CD8-positive, alpha-beta T cell (primary cell): ENCODE measurements at regions of chr19 and their contacts with region 1.

Region 1: DNA sequence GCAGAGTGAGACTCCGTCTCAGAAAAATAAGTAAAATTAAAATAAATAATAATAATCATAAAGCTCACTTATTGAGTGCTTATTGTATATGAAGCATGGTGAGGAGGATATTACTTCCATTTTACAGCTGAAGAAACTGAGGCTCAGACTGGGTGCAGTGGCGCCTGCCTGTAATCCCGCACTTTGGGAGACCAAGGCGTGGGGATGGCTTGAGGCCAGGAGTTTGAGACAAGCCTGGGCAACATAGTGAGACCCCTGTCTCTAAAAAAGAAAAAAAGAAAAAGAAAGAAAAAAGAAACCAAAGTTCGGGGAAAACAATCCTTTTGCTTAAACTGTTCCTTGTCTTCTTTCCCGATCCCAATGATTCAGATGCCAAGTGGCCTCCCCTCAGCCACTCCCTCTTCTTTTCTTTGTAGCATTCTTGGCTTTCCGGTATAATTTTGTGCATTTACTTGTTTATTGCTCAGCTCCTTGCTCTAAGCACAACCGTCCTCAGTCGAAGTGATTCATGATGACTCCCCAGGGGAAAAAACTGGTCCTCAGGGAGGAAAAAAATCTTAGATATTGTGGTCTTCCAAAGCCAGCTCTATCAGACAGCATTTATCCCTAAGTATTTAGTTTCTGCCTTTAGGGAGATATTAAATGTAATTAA is 965 bp upstream of the EIF3G start:
- DNase-seq: no peak
- ATAC-seq: no peak
- H3K4me3 ChIP-seq: no peak overlapping the region
- H3K4me3 Mint-ChIP-seq: peak overlapping the region; percentile 47
- H3K27ac ChIP-seq: no peak overlapping the region
- H3K27ac Mint-ChIP-seq: no peak overlapping the region
- H3K4me1 ChIP-seq: peaks cover 22% of the 10 kb centered on the region
- H3K4me1 Mint-ChIP-seq: peaks cover 29% of the 10 kb centered on the region
- H3K27me3 ChIP-seq: no peaks in the 10 kb centered on the region
- H3K27me3 Mint-ChIP-seq: no peaks in the 10 kb centered on the region
- CTCF ChIP-seq: no peak

Region 2: DNA sequence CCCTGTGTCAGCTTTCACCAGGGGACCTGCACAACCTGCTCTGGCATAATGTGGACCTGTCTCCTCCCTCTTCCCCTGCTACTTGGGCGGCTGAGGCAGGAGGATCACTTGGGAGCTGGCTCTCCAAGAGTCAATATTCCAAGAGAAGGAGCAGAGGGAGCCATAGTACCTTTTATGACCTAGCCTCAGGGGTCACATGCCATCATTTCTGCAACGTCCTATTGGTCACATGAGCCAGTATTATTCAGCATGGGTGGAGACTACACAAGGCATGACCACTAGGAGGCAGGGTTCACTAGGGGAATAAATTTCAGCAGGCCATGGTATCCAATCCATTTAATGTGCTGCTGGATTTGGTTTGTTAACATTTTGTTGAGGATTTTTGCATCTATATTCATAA is 46.5 kb before region 1 on chr19:
- CTCF ChIA-PET with region 1: no interaction called
- POLR2A ChIA-PET with region 1: no interaction called
- intact Hi-C with region 1: no loop called
- DNase-seq: peak in 6 of 9 experiments; percentile 34 to 83 (median 51)
- ATAC-seq: peak; percentile 84
- H3K4me3 ChIP-seq: no peak overlapping the region
- H3K4me3 Mint-ChIP-seq: no peak overlapping the region
- H3K27ac ChIP-seq: no peak overlapping the region
- H3K27ac Mint-ChIP-seq: peak overlapping the region; percentile 23
- H3K4me1 ChIP-seq: no peaks in the 10 kb centered on the region
- H3K4me1 Mint-ChIP-seq: no peaks in the 10 kb centered on the region
- H3K27me3 ChIP-seq: no peaks in the 10 kb centered on the region
- H3K27me3 Mint-ChIP-seq: no peaks in the 10 kb centered on the region
- CTCF ChIP-seq: peak; percentile 52

Region 3: DNA sequence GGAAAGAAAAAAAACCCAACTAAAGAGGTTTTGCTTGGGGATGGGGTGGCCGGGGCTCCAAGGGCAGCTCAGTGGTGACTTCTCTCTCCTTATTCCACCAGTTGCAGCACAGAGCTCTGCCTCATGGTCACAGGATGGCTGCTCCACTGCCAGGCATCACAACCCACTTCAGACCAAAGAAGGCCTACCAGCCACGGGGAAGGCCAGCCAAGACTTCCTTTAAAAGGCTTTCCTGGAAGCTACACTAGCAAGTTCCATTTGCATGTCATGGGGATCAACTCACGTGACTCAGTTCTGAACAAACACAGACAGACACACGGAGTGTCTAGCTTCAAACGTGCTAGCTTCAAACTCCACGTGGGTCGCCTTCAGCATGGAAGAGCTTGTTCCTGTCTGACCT is 12.2 kb after region 1 on chr19:
- CTCF ChIA-PET with region 1: interaction called, 11 read pairs
- POLR2A ChIA-PET with region 1: interaction called, 4 read pairs
- intact Hi-C with region 1: no loop called
- DNase-seq: no peak
- ATAC-seq: no peak
- H3K4me3 ChIP-seq: no peak overlapping the region
- H3K4me3 Mint-ChIP-seq: no peak overlapping the region
- H3K27ac ChIP-seq: no peak overlapping the region
- H3K27ac Mint-ChIP-seq: peak overlapping the region; percentile 22
- H3K4me1 ChIP-seq: no peaks in the 10 kb centered on the region
- H3K4me1 Mint-ChIP-seq: peaks cover 2% of the 10 kb centered on the region
- H3K27me3 ChIP-seq: no peaks in the 10 kb centered on the region
- H3K27me3 Mint-ChIP-seq: no peaks in the 10 kb centered on the region
- CTCF ChIP-seq: no peak

Region 4: DNA sequence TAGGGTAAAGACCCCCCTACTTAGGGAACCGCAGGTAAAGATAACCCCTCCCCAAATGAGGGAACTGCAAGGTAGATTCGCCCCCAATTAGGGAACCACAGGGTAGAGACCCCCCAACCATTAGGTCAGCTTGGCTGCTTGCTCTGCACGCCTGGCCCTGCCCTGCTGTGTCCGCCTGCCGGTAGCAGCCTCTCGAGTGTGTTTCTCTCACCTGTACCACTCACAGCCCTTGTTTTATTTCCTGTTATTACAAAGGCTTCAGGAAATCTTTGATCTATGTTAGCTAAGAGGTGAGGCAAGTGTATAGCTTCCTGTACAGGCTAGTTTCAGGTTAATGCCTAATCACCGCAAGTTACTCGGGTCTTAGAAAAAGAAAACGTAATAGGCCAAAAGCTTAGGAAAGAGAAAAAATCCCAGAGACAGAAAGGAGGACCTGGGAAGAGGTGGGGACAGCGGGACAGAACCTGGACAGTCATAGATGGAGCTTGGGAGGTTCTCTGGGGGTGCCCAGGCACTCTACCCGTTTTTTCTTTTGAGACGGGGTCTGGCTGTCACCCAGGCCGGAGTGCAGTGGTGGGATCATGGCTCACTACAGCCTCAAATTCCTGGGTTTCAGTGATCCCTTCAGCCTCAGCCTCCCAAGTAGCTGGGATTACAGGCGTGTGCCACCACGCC is 22.2 kb after region 1 on chr19:
- CTCF ChIA-PET with region 1: interaction called, 16 read pairs
- POLR2A ChIA-PET with region 1: interaction called, 7 read pairs
- intact Hi-C with region 1: loop called in 1 of 2 experiments (anchors 1 kb)
- DNase-seq: peak; percentile 19 to 86 (median 58)
- ATAC-seq: peak; percentile 94
- H3K4me3 ChIP-seq: peak overlapping the region; percentile 11 to 45
- H3K4me3 Mint-ChIP-seq: peak overlapping the region; percentile 76
- H3K27ac ChIP-seq: peak overlapping the region; percentile 80 to 94
- H3K27ac Mint-ChIP-seq: peak overlapping the region; percentile 98
- H3K4me1 ChIP-seq: peaks cover 45% of the 10 kb centered on the region
- H3K4me1 Mint-ChIP-seq: peaks cover 42% of the 10 kb centered on the region
- H3K27me3 ChIP-seq: no peaks in the 10 kb centered on the region
- H3K27me3 Mint-ChIP-seq: no peaks in the 10 kb centered on the region
- CTCF ChIP-seq: peak; percentile 29